ENCODE measurements at regions of chr11 and their contacts with region 1.

Region 1: GRCh38 chr11:65274735-65275682 is 13.2 kb downstream of the POLA2 start:
- DNase-seq: peak; percentile 79
- H3K4me3 ChIP-seq: no peak overlapping the region
- H3K27ac ChIP-seq: peak overlapping the region; percentile 16 to 42
- H3K4me1 ChIP-seq: no peaks in the 10 kb centered on the region
- H3K27me3 ChIP-seq: no peaks in the 10 kb centered on the region
- CTCF ChIP-seq: peak; percentile 40 to 96 (median 81)
- POLR2A ChIP-seq: no peak

Region 2: DNA sequence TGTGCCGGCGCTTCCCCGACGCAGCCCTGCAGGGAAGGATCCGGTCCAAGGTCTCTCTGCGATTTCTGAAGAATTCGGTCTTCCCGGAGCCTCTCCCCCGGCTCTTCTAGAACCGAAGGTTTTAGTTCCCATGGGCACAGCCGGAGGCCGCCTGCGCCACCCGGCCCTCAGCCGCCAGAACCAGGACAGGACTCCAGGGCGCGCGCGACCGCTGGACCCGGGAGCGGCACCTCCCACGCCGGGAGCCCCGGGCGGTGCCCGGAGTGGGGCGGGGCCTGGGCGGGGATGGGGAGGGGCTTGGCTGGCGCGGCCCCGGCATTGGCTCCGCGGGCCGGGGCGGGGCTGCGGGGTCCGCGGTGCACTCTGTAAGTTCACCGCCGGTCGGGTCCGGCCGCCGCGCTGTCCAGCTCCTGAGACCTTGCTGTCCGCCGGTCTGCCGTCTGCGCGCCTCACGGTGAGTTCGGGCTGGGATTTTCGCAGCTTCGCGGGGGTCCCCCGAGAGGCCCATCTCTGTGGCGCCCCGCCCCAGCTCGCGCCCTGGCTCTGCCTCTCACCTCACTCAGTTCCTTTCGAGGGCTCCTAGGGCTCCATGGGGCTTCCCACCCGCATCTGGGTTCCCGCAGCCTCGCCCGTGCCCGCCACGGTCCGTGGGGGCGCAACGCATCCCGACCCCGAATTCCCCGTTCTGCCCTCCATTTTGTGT is 39.6 kb after region 1 on chr11 and contains the start of gene CDC42EP2:
- intact Hi-C with region 1: loop called (anchors 1 kb)
- DNase-seq: peak; percentile 79
- H3K4me3 ChIP-seq: peak within 1 kb of the TSS; percentile 65 to 85
- H3K27ac ChIP-seq: peak within 1 kb of the TSS; percentile 84 to 86
- H3K4me1 ChIP-seq: no peaks in the 10 kb centered on the region
- H3K27me3 ChIP-seq: no peaks in the 10 kb centered on the region
- CTCF ChIP-seq: peak in 2 of 4 experiments; percentile 21 to 41
- POLR2A ChIP-seq: peak; percentile 77
- total RNA-seq, gene CDC42EP2: 7.7 to 8.7 TPM

Region 3: DNA sequence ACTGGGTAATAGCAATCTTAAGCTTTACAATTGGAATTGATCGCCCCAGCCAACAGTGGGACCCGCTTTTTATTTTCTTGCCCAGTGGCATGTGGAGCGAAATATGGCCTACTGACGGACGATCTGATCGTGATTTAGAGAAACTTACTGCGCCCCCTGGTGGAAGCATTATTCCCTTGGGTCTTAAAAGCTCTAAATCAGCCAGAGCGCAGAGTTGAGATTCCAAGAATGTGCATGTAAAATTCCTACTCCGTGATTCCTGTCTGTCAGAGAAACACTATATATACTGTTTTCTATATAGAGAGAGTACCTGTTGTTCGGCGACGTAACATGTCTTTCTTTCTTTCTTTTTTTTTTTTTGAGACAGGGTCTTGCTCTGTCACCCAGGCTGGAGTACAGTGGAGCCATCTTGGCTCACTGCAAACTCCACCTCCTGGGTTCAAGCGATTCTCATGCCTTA is 55.0 kb after region 1 on chr11:
- intact Hi-C with region 1: loop called (anchors 1 kb)
- DNase-seq: peak; percentile 95
- H3K4me3 ChIP-seq: no peak overlapping the region
- H3K27ac ChIP-seq: peak overlapping the region; percentile 27 to 63
- H3K4me1 ChIP-seq: no peaks in the 10 kb centered on the region
- H3K27me3 ChIP-seq: no peaks in the 10 kb centered on the region
- CTCF ChIP-seq: peak; percentile 79 to 93 (median 88)
- POLR2A ChIP-seq: no peak

Region 4: GRCh38 chr11:65418711-65419459 is 143.9 kb after region 1 on chr11:
- intact Hi-C with region 1: no loop called
- DNase-seq: peak; percentile 95
- H3K4me3 ChIP-seq: peak overlapping the region; percentile 7 to 24
- H3K27ac ChIP-seq: peak overlapping the region; percentile 100
- H3K4me1 ChIP-seq: peaks cover 27% of the 10 kb centered on the region
- H3K27me3 ChIP-seq: no peaks in the 10 kb centered on the region
- CTCF ChIP-seq: no peak
- POLR2A ChIP-seq: peak; percentile 40

Region 5: DNA sequence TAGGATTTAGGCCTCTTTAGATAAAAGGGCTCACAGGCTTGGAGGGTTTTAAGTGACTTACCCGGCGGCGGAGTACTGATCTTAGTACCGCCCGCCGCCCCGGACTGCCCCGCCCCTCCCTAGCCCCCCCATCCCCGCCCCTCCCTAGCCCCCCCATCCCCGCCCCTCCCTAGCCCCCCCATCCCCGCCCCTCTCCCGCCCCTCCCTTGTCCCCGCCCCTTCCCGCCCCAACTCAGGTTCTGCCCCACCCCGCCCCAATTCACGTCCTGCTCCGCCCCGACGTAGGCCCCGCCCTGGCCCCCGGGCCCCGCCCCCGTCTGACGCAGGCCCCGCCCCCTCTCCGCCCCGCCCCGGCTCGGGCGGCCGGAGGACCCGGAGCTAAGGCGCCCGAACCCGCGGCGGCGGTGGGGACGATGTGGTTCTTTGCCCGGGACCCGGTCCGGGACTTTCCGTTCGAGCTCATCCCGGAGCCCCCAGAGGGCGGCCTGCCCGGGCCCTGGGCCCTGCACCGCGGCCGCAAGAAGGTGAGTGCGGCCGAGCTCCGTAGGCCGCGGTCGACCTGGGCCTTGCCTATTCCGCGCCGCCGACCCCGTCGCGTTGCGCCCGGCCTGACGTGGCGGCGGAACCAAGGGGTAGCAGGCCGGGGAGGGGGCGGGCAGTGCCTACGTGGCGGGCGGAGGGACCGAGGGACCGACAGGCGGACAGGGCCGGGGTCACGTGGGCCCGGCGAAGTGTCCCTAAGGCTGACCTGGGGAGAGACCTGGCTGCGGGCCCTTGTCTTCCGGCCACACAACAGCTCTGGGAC is 249.9 kb after region 1 on chr11 and contains the start of gene SCYL1:
- intact Hi-C with region 1: loop called (anchors 10 kb)
- DNase-seq: peak; percentile 84
- H3K4me3 ChIP-seq: peak within 1 kb of the TSS; percentile 100
- H3K27ac ChIP-seq: peak within 1 kb of the TSS; percentile 90 to 94
- H3K4me1 ChIP-seq: peaks cover 13% of the 10 kb centered on the region
- H3K27me3 ChIP-seq: no peaks in the 10 kb centered on the region
- CTCF ChIP-seq: peak in 1 of 4 experiments; percentile 5
- POLR2A ChIP-seq: peak; percentile 50
- total RNA-seq, gene SCYL1: 125 to 177 TPM

Measured in prostate gland (tissue), 2 donors.